HepG2 (cell line): ENCODE measurements at regions of chr15 and their contacts with region 1.

Region 1: GRCh38 chr15:51401872-51402517 is 60.5 kb downstream of the GLDN start:
- DNase-seq: peak; percentile 23
- ATAC-seq: peak; percentile 82
- H3K4me3 ChIP-seq: no peak overlapping the region
- H3K27ac ChIP-seq: no peak overlapping the region
- H3K4me1 ChIP-seq: peaks cover 16% of the 10 kb centered on the region
- H3K27me3 ChIP-seq: peaks cover 0 to 25% of the 10 kb centered on the region in 2 experiments; a peak in 3 of 5 replicates
- CTCF ChIP-seq: peak; percentile 73
- EP300 ChIP-seq: no peak
- POLR2A ChIP-seq: no peak
- RAD21 ChIP-seq: no peak

Region 2: GRCh38 chr15:51162865-51163762 is 238.9 kb before region 1 on chr15:
- CTCF ChIA-PET with region 1: interaction called, 8 read pairs
- POLR2A ChIA-PET with region 1: no interaction called
- in situ Hi-C with region 1: loop called (anchors 5 kb)
- intact Hi-C with region 1: loop called (anchors 1 kb)
- DNase-seq: peak; percentile 45
- ATAC-seq: peak; percentile 96
- H3K4me3 ChIP-seq: no peak overlapping the region
- H3K27ac ChIP-seq: no peak overlapping the region
- H3K4me1 ChIP-seq: no peaks in the 10 kb centered on the region
- H3K27me3 ChIP-seq: no peaks in the 10 kb centered on the region
- CTCF ChIP-seq: peak; percentile 84
- EP300 ChIP-seq: no peak
- POLR2A ChIP-seq: no peak
- RAD21 ChIP-seq: peak; percentile 69; the same call in 1 of the 2 replicates

Region 3: DNA sequence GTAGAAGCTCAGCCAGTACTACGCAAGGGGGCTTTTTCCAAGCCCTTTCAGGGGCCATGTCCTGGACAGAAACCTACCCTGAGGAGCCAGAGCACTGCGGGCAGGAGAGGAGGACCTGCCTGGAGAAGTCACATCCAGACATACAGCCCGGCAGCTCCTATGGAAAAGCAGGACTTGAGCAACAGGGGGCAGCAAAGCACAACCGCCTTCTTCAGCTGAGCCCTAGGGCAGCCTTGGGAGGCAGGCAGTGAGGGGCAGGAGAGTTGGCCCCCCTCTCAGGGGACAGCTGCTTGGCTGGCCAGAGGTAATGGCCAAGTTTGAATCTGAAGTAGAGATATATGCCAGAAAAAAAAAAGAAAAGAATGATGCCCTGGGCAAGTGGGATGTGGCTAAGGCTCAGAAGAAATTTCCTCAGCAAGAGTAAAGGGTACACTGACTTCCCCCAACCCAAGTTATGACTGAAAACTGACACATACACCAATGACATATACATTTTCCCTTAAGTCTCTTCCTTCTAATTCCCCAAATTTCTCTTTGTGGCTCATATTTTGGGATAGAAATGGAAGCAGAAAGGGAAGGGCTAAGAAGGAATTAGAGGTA is 120.5 kb before region 1 on chr15:
- CTCF ChIA-PET with region 1: interaction called, 4 read pairs
- POLR2A ChIA-PET with region 1: no interaction called
- in situ Hi-C with region 1: no loop called
- intact Hi-C with region 1: loop called (anchors 2 kb)
- DNase-seq: peak; percentile 44
- ATAC-seq: peak; percentile 98
- H3K4me3 ChIP-seq: no peak overlapping the region
- H3K27ac ChIP-seq: no peak overlapping the region
- H3K4me1 ChIP-seq: peaks cover 23% of the 10 kb centered on the region
- H3K27me3 ChIP-seq: no peaks in the 10 kb centered on the region
- CTCF ChIP-seq: peak; percentile 92
- EP300 ChIP-seq: no peak
- POLR2A ChIP-seq: no peak
- RAD21 ChIP-seq: peak; percentile 90

Region 4: GRCh38 chr15:51380999-51381795 is 20.8 kb before region 1 on chr15:
- CTCF ChIA-PET with region 1: no interaction called
- POLR2A ChIA-PET with region 1: no interaction called
- in situ Hi-C with region 1: no loop called
- intact Hi-C with region 1: no loop called
- DNase-seq: peak; percentile 77
- ATAC-seq: peak; percentile 95
- H3K4me3 ChIP-seq: no peak overlapping the region
- H3K27ac ChIP-seq: no peak overlapping the region
- H3K4me1 ChIP-seq: no peaks in the 10 kb centered on the region
- H3K27me3 ChIP-seq: no peaks in the 10 kb centered on the region; a peak in 1 of 5 replicates
- CTCF ChIP-seq: peak; percentile 98
- EP300 ChIP-seq: no peak
- POLR2A ChIP-seq: no peak
- RAD21 ChIP-seq: peak; percentile 98

Region 5: DNA sequence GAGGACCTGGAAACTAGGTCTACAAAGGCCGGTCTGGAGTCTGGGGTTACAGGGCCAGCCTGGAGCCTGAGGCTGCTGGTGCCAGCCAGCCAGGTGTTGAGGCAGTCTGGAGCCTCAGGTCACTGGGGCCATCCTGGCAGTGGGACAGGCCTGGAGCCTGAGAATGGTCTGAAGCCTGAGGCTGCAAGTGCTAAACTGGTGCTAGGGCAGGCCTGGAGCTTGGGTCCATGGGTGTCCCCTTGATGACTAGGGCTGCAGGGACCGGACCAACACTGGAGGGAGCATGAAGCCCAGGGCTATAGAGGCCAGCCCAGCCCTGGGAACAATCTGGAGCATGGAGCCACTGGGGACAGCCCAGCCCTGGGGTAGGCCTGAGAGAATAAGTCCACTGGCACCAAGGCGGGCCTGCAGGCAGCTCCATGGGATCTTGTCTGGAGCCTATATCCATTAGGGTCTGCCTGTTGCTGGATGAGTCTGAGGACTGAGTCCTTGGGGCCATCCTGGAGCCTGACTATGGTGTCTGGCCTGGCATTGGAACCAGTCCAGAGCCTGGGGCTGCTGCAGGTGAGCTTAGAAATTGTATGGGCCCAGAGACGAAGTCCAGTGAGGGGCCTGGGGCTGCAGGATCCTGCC is 41.4 kb after region 1 on chr15:
- CTCF ChIA-PET with region 1: no interaction called
- POLR2A ChIA-PET with region 1: no interaction called
- in situ Hi-C with region 1: no loop called
- intact Hi-C with region 1: no loop called
- DNase-seq: no peak
- ATAC-seq: peak; percentile 61
- H3K4me3 ChIP-seq: no peak overlapping the region
- H3K27ac ChIP-seq: no peak overlapping the region
- H3K4me1 ChIP-seq: peaks cover 13% of the 10 kb centered on the region
- H3K27me3 ChIP-seq: no peaks in the 10 kb centered on the region
- CTCF ChIP-seq: no peak
- EP300 ChIP-seq: no peak
- POLR2A ChIP-seq: no peak
- RAD21 ChIP-seq: no peak

Region 6: GRCh38 chr15:51499379-51499976 is 97.5 kb after region 1 on chr15:
- CTCF ChIA-PET with region 1: interaction called, 5 read pairs
- POLR2A ChIA-PET with region 1: no interaction called
- in situ Hi-C with region 1: no loop called
- intact Hi-C with region 1: loop called (anchors 2 kb)
- DNase-seq: peak; percentile 43
- ATAC-seq: peak; percentile 81
- H3K4me3 ChIP-seq: no peak overlapping the region
- H3K27ac ChIP-seq: no peak overlapping the region
- H3K4me1 ChIP-seq: peaks cover 7% of the 10 kb centered on the region
- H3K27me3 ChIP-seq: no peaks in the 10 kb centered on the region
- CTCF ChIP-seq: peak; percentile 80
- EP300 ChIP-seq: no peak
- POLR2A ChIP-seq: no peak
- RAD21 ChIP-seq: no peak; the same call in 1 of the 2 replicates